ENCODE measurements at regions of chr3 and their contacts with region 1.

Region 1: GRCh38 chr3:185770109-185770508 is 54.7 kb downstream of the IGF2BP2 start:
- DNase-seq: no peak
- H3K4me3 ChIP-seq: no peak overlapping the region
- H3K27me3 ChIP-seq: no peaks in the 10 kb centered on the region
- CTCF ChIP-seq: no peak

Region 2: DNA sequence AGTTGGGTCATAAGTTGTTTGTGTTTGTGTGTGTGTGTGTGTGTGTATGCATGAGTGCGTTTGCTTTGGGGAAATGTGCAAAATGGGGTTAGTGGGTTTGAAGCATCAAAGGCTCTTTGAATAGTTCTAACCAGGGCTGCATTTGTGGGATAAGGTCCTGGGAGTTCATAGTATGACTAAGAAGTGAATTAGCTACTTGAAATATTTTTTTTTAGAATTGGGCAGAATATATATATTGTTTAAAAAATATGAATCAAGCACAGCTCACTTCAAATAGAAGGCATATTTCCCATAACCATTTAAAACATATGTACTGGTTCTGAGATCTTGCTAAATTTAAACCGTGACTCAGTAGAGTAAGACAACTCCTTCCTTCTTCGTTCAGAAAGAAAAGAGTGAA is 11.7 kb after region 1 on chr3:
- CTCF ChIA-PET with region 1: interaction called, 13 read pairs
- POLR2A ChIA-PET with region 1: no interaction called
- DNase-seq: no peak
- H3K4me3 ChIP-seq: no peak overlapping the region
- H3K27me3 ChIP-seq: no peaks in the 10 kb centered on the region
- CTCF ChIP-seq: no peak

Measured in BJ (cell line).